ENCODE measurements at regions of chr12 and their contacts with region 1.

Region 1: DNA sequence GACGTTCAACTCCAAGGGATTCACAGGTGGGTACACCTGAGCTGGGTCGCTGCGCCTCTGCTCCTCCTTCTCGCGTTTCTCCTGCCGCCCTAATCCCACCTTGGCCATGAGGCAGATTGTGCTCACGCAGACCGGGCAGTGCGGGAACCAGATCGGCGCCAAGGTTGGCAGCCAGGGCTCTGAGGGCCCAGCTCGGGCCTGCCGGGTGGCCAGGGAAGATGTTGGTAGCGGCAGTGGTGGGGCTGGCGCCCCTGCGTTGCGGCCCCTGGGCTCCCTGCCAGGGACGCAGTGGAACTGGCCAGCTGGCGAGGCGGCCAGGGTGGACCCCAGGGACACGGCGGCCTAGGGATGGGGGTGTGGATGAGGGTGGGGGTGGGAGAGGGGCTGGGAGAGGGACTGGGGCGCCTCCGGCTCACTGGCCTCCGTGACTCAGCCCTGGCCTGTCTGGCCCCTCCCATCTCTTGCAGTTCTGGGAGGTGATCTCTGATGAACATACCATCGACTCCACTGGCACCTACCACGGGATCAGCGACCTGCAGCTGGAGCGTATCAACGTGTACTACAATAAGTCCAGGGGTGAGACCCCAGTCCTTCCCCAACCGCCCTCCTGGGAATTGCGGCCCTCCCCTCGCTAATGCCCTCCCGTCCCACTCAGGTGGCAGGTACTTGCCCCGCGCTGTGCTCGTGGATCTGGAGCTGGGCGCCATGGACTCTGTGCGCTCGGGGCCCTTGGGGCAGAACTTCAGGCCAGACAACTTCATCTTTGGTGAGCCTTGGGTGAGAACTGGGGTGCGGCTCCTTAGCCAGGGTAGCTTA is 114.9 kb upstream of the ALG10B start:
- DNase-seq: no peak
- ATAC-seq: no peak
- H3K4me3 ChIP-seq: no peak overlapping the region
- H3K27ac ChIP-seq: no peak overlapping the region
- H3K4me1 ChIP-seq: no peaks in the 10 kb centered on the region
- H3K27me3 ChIP-seq: no peaks in the 10 kb centered on the region
- CTCF ChIP-seq: no peak
- POLR2A ChIP-seq: no peak
- RAD21 ChIP-seq: no peak

Region 2: GRCh38 chr12:37565112-37565511 is 636.6 kb before region 1 on chr12:
- CTCF ChIA-PET with region 1: no interaction called
- POLR2A ChIA-PET with region 1: no interaction called
- RAD21 ChIA-PET with region 1: no interaction called
- intact Hi-C with region 1: no loop called
- DNase-seq: no peak
- ATAC-seq: no peak
- H3K4me3 ChIP-seq: no peak overlapping the region
- H3K27ac ChIP-seq: no peak overlapping the region
- H3K4me1 ChIP-seq: no peaks in the 10 kb centered on the region
- H3K27me3 ChIP-seq: no peaks in the 10 kb centered on the region
- CTCF ChIP-seq: no peak
- POLR2A ChIP-seq: no peak
- RAD21 ChIP-seq: no peak

Region 3: GRCh38 chr12:38159591-38160317 is 41.9 kb before region 1 on chr12:
- CTCF ChIA-PET with region 1: no interaction called
- POLR2A ChIA-PET with region 1: no interaction called
- RAD21 ChIA-PET with region 1: no interaction called
- intact Hi-C with region 1: no loop called
- DNase-seq: no peak
- ATAC-seq: no peak
- H3K4me3 ChIP-seq: no peak overlapping the region
- H3K27ac ChIP-seq: no peak overlapping the region
- H3K4me1 ChIP-seq: no peaks in the 10 kb centered on the region
- H3K27me3 ChIP-seq: no peaks in the 10 kb centered on the region
- CTCF ChIP-seq: no peak
- POLR2A ChIP-seq: no peak
- RAD21 ChIP-seq: no peak

Region 4: DNA sequence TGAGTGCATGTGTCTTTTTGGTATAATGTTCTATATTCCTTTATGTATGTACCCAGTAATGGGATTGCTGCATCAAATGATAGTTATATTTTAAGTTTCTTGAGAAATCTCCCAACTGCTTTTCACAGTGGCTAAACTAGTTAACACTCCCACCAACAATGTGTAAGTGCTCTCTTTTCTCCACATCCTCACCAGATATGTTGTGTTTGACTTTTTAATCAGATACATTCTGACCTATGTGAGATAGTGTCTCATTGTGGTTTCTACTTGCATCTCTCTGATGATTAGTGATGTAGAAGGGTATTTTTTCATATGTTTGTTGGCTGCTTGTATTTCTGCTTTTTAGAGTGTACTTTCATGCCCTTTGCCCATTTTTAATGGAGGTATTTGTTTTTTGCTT is 52.1 kb after region 1 on chr12:
- CTCF ChIA-PET with region 1: no interaction called
- POLR2A ChIA-PET with region 1: no interaction called
- RAD21 ChIA-PET with region 1: no interaction called
- intact Hi-C with region 1: loop called (anchors 10 kb)
- DNase-seq: no peak
- ATAC-seq: no peak
- H3K4me3 ChIP-seq: no peak overlapping the region
- H3K27ac ChIP-seq: no peak overlapping the region
- H3K4me1 ChIP-seq: no peaks in the 10 kb centered on the region
- H3K27me3 ChIP-seq: no peaks in the 10 kb centered on the region
- CTCF ChIP-seq: no peak
- POLR2A ChIP-seq: no peak
- RAD21 ChIP-seq: no peak

Measured in HCT116 (cell line).